Mammary epithelial cell (primary cell): ENCODE measurements at regions of chr17 and their contacts with region 1.

Region 1: DNA sequence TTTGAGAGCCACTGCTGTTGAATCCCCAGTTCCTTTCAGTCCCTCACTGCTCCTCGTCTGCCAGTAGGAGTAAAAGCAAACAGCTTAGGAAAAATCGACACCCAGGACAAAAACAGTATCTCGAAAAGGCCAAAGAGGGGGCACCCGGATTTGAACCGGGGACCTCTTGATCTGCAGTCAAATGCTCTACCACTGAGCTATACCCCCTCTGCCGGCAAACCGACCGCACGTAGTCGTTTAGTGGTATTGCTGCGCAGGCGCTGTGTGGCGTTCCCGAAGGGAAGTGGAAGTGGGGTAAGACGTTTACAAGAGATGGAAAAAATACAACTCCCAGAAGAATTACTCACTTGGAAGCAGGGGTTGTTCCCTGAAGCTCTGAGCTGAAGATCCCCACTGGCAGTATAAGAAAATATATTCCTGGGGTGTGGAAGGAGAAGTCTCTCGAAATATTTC is 2.2 kb upstream of the PLXDC1 start:
- DNase-seq: peak; percentile 78
- H3K4me3 ChIP-seq: peak overlapping the region; percentile 62 to 94 (median 85)
- H3K27ac ChIP-seq: peak overlapping the region; percentile 53
- H3K4me1 ChIP-seq: peaks cover 20% of the 10 kb centered on the region
- H3K27me3 ChIP-seq: peaks cover 4% of the 10 kb centered on the region
- CTCF ChIP-seq: no peak

Region 2: GRCh38 chr17:38729886-38730525 is 423.6 kb before region 1 on chr17 and contains the start of gene CISD3:
- CTCF ChIA-PET with region 1: no interaction called
- dilution Hi-C with region 1: no loop called
- in situ Hi-C with region 1: no loop called
- intact Hi-C with region 1: loop called (anchors 1 kb)
- DNase-seq: peak; percentile 74
- H3K4me3 ChIP-seq: peak within 1 kb of the TSS; percentile 65 to 79 (median 68)
- H3K27ac ChIP-seq: peak within 1 kb of the TSS; percentile 41
- H3K4me1 ChIP-seq: peaks cover 12% of the 10 kb centered on the region
- H3K27me3 ChIP-seq: no peaks in the 10 kb centered on the region
- CTCF ChIP-seq: peak; percentile 40 to 44
- total RNA-seq, gene CISD3: 3.3 to 30.4 TPM

Region 3: DNA sequence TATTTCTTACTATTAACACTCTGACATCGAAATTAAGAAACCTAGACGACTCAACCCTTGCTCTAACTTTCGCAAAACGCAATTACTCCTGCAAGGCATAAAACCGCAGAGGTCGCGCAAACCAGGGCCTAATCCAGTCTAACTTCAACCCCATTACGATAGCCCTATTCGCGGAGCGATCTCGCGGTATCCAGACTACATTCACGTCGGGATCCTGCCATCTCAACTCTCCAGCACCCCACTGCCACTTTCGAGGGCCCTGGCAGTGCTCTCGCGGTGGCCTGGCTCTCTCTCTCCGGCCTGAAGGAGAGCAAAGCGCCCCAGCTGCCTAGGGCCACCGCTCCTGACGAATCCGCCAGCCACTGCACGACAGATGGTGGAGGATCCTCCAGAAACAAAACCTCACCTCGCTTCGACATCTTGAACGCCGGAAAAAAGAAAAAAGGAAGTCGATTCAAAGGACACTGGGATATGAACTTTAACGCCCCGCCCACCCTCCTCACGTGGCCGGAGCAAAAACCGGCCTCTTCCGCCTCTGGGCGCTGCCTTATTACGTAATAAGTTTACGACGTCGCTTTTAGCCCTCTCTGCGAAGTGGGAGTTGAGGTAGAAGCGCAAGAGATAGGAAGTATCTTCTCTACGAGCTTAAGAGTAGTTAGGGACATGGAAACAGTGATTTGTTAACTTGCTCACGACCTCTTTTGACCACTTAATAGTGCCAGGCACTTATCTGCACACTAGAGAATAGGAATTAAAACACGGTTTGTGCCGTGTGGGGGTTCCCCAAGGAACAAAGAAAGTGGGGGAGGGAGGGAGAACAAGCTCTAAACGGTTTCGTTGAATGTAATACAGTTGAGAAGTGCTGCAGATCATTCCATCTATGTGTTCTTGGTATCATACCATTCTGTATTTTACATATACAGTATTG is 300.1 kb before region 1 on chr17 and contains the start of gene RPL23:
- CTCF ChIA-PET with region 1: interaction called, 6 read pairs
- dilution Hi-C with region 1: no loop called
- in situ Hi-C with region 1: no loop called
- intact Hi-C with region 1: loop called (anchors 5 kb)
- DNase-seq: peak; percentile 94
- H3K4me3 ChIP-seq: peak within 1 kb of the TSS; percentile 59 to 98 (median 86)
- H3K27ac ChIP-seq: peak within 1 kb of the TSS; percentile 92
- H3K4me1 ChIP-seq: peaks cover 10% of the 10 kb centered on the region
- H3K27me3 ChIP-seq: no peaks in the 10 kb centered on the region
- CTCF ChIP-seq: no peak
- total RNA-seq, gene RPL23: 693 to 1,265 TPM

Region 4: GRCh38 chr17:38922538-38923297 is 230.9 kb before region 1 on chr17:
- CTCF ChIA-PET with region 1: interaction called, 17 read pairs
- dilution Hi-C with region 1: no loop called
- in situ Hi-C with region 1: no loop called
- intact Hi-C with region 1: no loop called
- DNase-seq: peak; percentile 15
- H3K4me3 ChIP-seq: no peak overlapping the region
- H3K27ac ChIP-seq: no peak overlapping the region
- H3K4me1 ChIP-seq: no peaks in the 10 kb centered on the region
- H3K27me3 ChIP-seq: no peaks in the 10 kb centered on the region
- CTCF ChIP-seq: peak in 1 of 2 donors; percentile 0

Region 5: GRCh38 chr17:38969281-38969680 is 184.3 kb before region 1 on chr17:
- CTCF ChIA-PET with region 1: no interaction called
- dilution Hi-C with region 1: no loop called
- in situ Hi-C with region 1: no loop called
- intact Hi-C with region 1: no loop called
- DNase-seq: no peak
- H3K4me3 ChIP-seq: no peak overlapping the region
- H3K27ac ChIP-seq: no peak overlapping the region
- H3K4me1 ChIP-seq: no peaks in the 10 kb centered on the region
- H3K27me3 ChIP-seq: no peaks in the 10 kb centered on the region
- CTCF ChIP-seq: no peak

Region 6: DNA sequence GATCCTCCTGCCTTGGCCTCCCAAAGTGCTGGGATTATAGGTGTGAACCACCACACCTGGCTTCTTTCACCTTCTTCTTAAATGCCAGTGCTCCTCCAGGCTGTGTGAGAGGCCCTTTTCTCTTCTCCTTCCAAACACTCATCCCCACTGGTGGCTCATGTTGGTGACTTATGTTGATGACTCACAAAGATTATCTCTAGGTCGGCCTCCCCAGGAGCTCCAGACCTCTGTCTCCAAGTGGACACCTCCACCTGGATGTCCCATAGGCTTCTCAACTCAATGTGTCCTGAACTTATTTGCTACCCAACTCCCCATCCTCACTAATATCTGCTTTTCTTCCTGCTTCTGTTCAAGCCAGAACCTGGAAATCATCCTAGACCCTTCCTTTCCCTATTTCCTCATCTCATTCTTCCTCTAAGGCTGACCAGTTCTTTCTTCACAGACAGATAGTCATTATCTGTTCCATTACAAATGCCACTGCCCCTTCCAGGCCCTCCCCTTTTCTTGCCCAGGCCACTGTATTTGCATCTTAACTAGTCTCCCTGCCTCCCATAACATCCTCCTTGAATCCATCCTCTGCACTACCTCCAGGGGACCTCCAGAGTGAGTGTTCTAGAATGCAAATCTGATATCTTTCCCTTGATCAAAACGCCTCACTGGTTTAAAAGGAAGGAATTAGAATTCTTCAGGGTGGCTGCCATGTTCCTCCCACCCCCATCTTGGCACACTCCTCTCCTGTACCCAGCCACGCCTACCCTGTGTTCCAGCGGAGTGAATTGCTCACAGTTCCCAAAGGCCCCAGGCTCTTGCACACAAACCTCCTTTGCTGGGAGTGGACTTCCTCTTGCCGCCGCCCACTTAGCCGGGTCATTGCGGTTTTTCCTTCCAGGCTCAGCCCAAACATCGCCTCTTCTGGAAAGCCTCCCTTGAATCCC is 151.7 kb before region 1 on chr17:
- CTCF ChIA-PET with region 1: no interaction called
- dilution Hi-C with region 1: no loop called
- in situ Hi-C with region 1: loop called in 1 of 2 experiments (anchors 25 kb)
- intact Hi-C with region 1: loop called (anchors 5 kb)
- DNase-seq: peak; percentile 88
- H3K4me3 ChIP-seq: no peak overlapping the region
- H3K27ac ChIP-seq: peak overlapping the region; percentile 9
- H3K4me1 ChIP-seq: peaks cover 20% of the 10 kb centered on the region
- H3K27me3 ChIP-seq: no peaks in the 10 kb centered on the region
- CTCF ChIP-seq: no peak

Region 7: DNA sequence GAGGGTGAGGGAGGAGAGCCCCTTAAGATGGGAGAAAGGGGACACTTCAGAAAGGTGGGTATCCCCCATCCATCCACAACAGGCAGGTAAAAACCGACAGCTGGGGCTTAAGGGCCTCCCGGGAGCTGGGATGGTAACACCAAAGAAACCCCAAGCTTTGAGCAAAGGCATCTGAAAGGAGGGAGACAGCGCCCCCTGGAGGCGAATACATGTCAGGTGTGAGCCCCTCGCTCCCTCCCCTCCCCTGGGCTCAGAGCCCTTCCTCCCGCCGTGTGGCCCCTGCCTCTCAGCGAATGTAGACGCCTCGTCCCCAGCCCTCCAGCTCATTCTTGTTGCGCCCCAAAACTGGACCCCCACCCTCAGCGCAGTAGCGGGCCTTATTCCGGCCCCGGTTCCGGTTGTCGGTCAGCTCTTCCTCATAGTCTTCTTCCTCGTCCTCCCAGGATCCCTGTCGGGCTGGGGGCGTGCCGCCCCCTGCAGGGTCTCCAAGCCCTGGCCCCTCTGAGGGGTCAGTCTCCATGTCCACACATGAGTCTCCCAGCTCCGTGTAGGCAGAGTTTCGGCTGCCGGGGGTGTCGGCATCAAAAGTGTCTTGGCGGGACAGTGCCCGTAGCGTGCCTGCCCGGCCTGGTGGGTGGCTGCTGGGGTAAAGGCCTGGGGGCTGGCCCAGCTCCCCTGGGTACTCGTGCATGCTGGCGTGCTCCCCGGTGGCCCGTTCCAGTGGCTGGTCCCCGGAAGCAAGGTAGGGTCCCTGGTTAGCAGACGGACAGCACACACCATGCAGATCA is 21.5 kb after region 1 on chr17:
- CTCF ChIA-PET with region 1: no interaction called
- dilution Hi-C with region 1: no loop called
- in situ Hi-C with region 1: no loop called
- intact Hi-C with region 1: loop called (anchors 1 kb)
- DNase-seq: no peak
- H3K4me3 ChIP-seq: no peak overlapping the region
- H3K27ac ChIP-seq: no peak overlapping the region
- H3K4me1 ChIP-seq: peaks cover 10% of the 10 kb centered on the region
- H3K27me3 ChIP-seq: no peaks in the 10 kb centered on the region
- CTCF ChIP-seq: peak; percentile 67 to 76

Region 8: GRCh38 chr17:39244600-39245570 is 91.3 kb after region 1 on chr17:
- CTCF ChIA-PET with region 1: no interaction called
- dilution Hi-C with region 1: no loop called
- in situ Hi-C with region 1: no loop called
- intact Hi-C with region 1: loop called (anchors 1 kb)
- DNase-seq: peak; percentile 75
- H3K4me3 ChIP-seq: no peak overlapping the region
- H3K27ac ChIP-seq: no peak overlapping the region
- H3K4me1 ChIP-seq: peaks cover 8% of the 10 kb centered on the region
- H3K27me3 ChIP-seq: no peaks in the 10 kb centered on the region
- CTCF ChIP-seq: peak; percentile 90 to 95